ENCODE measurements at regions of chr3 and their contacts with region 1.

Region 1: GRCh38 chr3:4950351-4950784 is 28.9 kb upstream of the BHLHE40 start:
- DNase-seq: no peak
- ATAC-seq: no peak
- H3K4me3 ChIP-seq: peak overlapping the region; percentile 9; the same call in 1 of the 2 replicates
- H3K27ac ChIP-seq: peak overlapping the region; percentile 91
- H3K4me1 ChIP-seq: peaks cover 13% of the 10 kb centered on the region; the same call in 1 of the 2 replicates
- H3K27me3 ChIP-seq: no peaks in the 10 kb centered on the region
- CTCF ChIP-seq: no peak

Region 2: DNA sequence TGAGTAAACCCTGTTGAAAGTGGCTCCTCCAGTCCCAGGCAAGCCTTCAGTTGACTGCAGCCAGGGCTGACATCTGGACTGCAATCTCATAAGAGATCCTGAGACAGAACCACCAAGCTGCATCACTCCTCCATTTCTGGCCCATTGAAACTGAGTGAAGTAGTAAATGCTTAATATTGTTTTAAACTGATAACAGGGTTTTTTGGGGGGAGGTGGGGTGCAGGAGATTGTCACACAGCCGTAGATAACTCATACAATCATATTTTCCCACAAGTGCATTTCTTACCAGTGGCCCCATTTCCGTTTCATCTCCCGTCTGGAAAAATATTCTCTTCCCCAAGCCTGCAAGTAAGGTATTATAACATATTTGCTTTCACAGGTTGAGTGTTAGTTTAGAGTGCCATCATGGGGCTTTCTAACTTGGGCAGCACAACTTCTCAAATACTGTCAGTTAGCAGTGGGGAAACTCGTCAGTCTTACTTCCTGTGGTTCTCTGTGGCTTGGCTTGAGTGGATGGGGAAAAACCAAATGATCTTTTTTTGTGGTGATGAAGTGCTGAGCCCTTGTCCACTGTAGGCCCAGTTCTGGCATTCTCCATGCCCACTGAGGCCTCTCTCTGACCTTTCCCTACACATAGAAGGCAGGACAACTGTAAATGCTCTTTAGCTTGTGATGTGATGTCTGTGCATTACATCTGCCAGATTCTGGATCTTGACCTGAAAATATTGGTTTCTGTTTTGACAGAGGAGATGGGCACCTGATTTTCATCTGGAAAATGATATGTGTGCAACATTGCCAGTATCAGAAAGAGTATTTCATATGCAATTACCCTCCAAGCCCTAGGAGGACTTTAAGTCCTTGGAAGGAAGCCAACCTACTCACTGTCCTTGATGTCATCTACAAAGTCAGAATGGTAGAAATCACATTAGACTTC is 61.2 kb before region 1 on chr3:
- CTCF ChIA-PET with region 1: no interaction called
- POLR2A ChIA-PET with region 1: no interaction called
- intact Hi-C with region 1: loop called (anchors 5 kb)
- DNase-seq: peak; percentile 31
- ATAC-seq: no peak
- H3K4me3 ChIP-seq: no peak overlapping the region
- H3K27ac ChIP-seq: no peak overlapping the region
- H3K4me1 ChIP-seq: peaks cover 36% of the 10 kb centered on the region
- H3K27me3 ChIP-seq: no peaks in the 10 kb centered on the region
- CTCF ChIP-seq: no peak

Region 3: DNA sequence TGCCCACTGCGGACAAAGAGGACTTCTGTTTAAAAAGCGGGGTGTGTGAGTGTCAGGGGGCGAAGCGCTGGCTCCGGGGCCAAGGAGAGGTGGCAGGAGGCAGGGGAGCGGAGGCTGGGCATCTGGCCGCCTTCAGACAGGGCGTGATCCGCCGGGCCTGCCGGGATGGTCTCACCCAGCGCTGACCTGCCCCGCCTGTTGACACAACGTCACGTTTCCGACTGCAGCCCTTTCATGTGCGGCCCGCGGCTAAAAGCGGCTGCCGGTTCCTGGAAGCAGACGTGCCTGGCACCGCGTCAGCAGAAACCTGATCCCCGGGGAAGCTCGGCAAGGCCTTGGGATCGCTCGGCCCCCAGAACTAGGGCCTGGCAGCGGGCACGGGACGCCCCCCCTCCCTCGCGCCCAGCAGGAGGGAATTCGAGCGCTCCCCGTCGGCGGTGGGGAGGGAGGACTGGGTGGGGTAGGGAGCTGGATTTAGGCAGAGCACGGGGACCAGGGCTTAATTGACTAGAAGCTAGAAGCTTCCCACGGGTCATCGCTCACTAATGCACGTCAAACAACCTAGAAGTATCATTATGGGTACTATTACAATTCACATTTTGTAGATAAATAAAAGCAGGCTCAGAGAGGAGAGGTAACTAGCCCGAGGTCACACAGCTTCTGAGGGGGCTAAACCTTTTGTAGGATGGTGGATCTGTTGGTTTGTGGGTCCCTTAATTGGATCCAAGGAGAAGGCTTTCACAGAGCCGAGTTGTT is 36.6 kb after region 1 on chr3:
- CTCF ChIA-PET with region 1: no interaction called
- POLR2A ChIA-PET with region 1: no interaction called
- intact Hi-C with region 1: no loop called
- DNase-seq: peak; percentile 98
- ATAC-seq: peak; percentile 69
- H3K4me3 ChIP-seq: peak overlapping the region; percentile 35; the same call in 1 of the 2 replicates
- H3K27ac ChIP-seq: peak overlapping the region; percentile 90
- H3K4me1 ChIP-seq: peaks cover 63% of the 10 kb centered on the region
- H3K27me3 ChIP-seq: no peaks in the 10 kb centered on the region
- CTCF ChIP-seq: 0 out of 2 replicates have a peak, but pooled peaks have one; percentile 25